ENCODE measurements at regions of chr11 and their contacts with region 1.

Region 1: DNA sequence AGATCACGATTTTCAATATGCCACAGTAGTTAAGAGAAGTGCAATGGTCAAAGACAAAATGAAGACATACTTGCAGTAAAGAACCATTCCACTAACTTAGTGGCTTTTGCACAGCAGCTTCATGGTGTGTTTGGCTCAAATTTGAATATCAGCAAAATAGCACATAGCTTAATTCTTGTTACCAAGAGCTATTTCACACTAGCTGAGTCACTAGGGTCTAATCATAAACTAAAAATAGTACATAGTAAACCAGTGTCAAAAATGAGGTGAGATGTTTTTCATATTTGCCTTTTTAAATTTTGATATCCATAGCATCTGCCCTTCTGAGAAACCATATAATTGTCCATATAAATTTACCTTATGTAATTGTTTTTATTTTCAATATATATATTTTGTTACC is 325.0 kb upstream of the LUZP2 start:
- DNase-seq: no peak
- ATAC-seq: no peak
- H3K4me3 ChIP-seq: no peak overlapping the region
- H3K27ac ChIP-seq: no peak overlapping the region
- H3K4me1 ChIP-seq: no peaks in the 10 kb centered on the region
- H3K27me3 ChIP-seq: no peaks in the 10 kb centered on the region
- CTCF ChIP-seq: no peak

Region 2: DNA sequence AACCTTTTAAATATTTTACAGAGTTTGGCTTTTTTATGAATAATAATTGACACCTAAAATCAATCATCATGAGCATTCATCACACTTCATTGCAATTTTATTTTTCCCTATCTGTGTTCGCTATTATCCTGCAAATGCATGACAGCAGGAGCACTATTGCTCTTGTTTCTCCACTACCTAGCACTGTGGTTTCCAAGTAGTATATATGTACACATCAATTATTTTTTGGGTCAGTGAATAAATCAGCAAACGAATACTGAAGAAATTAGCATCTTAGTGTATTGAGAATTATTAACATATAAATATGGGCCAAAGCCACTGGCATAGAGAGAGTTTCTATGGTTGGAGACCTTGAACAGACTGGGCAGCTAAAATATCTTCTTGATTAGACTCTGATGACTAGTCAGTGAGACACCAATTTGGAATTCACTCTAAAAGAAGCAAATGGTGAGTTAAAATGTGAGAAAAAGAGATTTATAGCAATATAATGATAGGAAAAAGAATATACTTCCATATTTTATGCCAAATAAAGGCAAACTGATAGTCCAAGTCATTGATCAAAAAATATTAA is 406.1 kb before region 1 on chr11:
- intact Hi-C with region 1: no loop called
- DNase-seq: no peak
- ATAC-seq: no peak
- H3K4me3 ChIP-seq: no peak overlapping the region
- H3K27ac ChIP-seq: no peak overlapping the region
- H3K4me1 ChIP-seq: no peaks in the 10 kb centered on the region
- H3K27me3 ChIP-seq: no peaks in the 10 kb centered on the region
- CTCF ChIP-seq: no peak

Region 3: DNA sequence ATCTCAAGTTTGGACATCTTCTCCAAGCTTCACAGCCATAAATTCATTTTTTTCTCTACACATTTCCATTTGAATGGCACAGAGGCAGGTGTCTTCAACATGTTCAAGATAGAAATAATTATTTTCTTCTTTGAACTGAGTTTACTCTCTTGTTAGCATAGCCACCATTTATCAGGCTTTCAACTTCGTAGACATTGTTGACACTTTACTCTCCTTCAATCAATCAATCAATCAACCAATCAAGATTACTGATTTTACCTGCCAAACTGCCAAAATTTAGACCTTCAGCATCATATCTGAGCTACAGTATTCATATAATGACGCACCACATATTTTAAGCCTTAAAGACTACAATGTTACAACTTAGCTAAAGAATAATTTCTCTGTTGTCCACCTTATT is 24.9 kb after region 1 on chr11:
- intact Hi-C with region 1: loop called in 1 of 3 experiments (anchors 2 kb)
- DNase-seq: no peak
- ATAC-seq: no peak
- H3K4me3 ChIP-seq: no peak overlapping the region
- H3K27ac ChIP-seq: no peak overlapping the region
- H3K4me1 ChIP-seq: no peaks in the 10 kb centered on the region
- H3K27me3 ChIP-seq: no peaks in the 10 kb centered on the region
- CTCF ChIP-seq: no peak